GM13977 (cell line): ENCODE measurements at regions of chr19 and their contacts with region 1.

Region 1: GRCh38 chr19:50794439-50795237 is 4.4 kb downstream of the ACP4 start:
- DNase-seq: peak; percentile 76
- CTCF ChIP-seq: peak; percentile 47

Region 2: DNA sequence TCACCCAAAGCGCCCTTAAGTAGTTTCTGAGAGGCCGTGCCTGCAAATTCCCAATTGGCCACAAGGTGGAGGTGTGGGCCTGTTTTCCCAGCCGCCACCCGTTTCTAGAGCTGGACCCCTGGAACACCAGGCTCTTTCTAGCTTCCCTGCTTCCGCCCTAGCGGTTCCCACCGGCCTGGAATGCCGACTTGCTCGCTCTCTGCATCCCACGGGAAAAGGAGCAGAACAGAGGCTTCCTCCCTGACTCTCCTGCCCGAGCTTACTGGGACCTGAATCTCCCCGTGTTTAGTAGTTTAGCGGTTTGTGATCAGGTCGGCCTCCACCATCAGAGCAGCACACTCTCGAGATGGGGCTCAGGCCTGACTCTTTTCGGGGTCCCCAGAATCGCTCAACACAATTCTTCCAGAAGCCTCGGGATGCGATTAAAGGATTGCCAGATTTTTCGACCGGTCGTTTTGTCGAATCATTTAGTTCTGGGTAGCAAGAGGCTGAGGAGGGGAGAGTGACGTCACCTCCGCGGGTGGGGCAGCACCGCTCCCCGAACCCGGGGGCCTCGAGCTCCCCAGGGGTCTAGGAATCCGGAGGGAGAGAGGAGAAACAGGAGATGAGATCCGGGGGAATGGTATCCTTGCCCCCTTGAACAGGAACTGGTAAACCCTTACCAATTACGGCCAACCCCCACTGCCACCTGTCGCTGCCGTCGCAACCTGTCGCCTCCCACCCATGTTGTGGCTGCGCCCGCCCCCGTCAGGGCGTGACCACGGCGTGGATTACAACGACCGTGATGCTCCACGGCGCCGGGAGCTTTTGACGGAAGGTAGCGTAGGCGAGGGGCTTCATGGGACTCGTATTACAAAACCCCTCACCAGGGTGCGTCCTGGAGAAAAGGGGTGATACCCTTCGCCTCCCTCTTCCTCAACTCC is 437.2 kb before region 1 on chr19:
- in situ Hi-C with region 1: loop called (anchors 25 kb)
- DNase-seq: peak; percentile 62
- CTCF ChIP-seq: peak; percentile 81

Region 3: GRCh38 chr19:50537762-50538230 is 256.8 kb before region 1 on chr19:
- in situ Hi-C with region 1: loop called (anchors 25 kb)
- DNase-seq: peak; percentile 86
- CTCF ChIP-seq: peak; percentile 86

Region 4: DNA sequence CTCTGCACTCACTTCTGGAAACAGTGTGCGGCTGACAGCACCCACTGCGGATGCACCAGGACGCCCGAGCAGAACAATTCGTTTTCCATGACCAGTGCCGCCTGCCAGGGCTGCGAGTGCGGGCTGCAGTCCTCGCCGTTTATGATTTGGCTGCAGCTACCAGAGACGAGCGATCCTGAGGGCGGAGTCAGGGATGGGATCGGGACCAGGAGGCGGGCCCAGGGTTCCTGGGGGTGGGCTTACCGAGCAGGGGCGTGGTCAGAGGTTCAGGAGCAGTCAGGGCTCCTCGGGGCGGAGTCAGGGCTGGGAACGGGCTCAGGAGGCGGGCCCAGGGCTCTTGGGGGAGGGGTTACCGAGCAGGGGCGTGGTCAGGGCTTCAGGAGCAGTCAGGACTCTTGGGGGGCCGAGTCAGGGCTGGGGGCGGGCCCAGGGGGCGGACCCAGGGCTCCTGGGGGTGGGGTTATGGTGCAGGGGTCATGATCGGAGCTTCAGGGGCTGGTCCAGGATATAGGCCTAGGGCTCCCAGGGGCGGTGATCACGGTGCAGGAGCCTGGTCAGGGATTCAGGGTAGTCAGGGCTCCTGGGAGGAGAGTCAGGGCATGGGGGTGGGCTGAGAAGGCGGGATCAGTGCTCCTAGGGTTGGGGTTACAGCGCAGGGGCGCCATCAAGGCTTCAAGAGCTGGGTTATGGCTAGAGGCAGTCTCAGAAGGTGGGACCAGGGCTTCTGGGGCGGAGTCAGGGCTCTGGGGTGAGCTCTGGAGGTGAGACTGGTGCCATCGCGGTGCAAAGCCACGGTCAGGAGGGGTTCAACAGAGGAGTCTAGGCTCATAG is 114.8 kb after region 1 on chr19:
- in situ Hi-C with region 1: loop called (anchors 10 kb)
- DNase-seq: peak; percentile 92
- CTCF ChIP-seq: no peak